ENCODE measurements at regions of chr11 and their contacts with region 1.

Region 1: GRCh38 chr11:18540207-18541009 is 13.7 kb upstream of the TSG101 start:
- DNase-seq: no peak
- H3K4me3 Mint-ChIP-seq: no peak overlapping the region
- H3K27ac Mint-ChIP-seq: no peak overlapping the region
- H3K4me1 Mint-ChIP-seq: peaks cover 8% of the 10 kb centered on the region
- H3K27me3 Mint-ChIP-seq: no peaks in the 10 kb centered on the region

Region 2: DNA sequence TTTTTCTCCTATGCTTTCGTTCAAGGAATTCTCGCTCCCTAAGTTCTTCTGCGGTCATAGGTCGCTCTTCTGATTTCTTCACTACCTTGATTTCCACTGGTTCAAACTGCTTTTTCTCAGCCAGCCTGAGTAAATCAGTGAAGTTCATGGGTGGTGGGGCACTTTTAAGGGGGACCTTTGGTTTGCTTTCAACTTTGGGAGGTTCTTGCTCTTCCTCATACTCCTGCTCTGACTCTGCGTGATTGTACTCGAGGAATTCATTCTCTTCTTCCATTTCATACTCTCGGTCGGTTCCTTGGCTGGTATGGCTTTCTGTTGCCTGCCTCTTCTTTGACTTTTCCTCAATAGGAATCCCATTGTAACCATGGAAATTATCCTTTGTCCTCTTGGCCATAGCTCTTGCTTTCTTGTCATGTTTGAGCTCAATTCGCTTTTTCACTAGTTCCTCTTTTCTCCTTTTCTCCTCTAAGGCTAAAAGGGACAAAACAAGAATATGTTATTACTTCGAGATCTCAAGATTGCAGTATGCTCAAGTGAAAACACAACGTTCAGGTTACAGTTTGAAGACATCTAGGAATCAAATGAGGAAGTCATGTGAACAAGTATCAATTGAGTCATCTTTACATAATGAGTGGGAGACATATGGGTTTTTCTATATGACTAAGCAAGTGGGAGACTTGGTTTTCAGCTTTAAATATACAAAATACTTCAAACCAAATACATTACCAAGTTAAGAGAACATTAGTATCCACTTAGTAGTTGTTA is 75.4 kb after region 1 on chr11:
- intact Hi-C with region 1: loop called (anchors 1 kb)
- DNase-seq: no peak
- H3K4me3 Mint-ChIP-seq: peak overlapping the region; percentile 70
- H3K27ac Mint-ChIP-seq: peak overlapping the region; percentile 87
- H3K4me1 Mint-ChIP-seq: peaks cover 67% of the 10 kb centered on the region
- H3K27me3 Mint-ChIP-seq: no peaks in the 10 kb centered on the region

Region 3: GRCh38 chr11:18650859-18651557 is 110.6 kb after region 1 on chr11:
- intact Hi-C with region 1: loop called (anchors 1 kb)
- DNase-seq: peak; percentile 47
- H3K4me3 Mint-ChIP-seq: no peak overlapping the region
- H3K27ac Mint-ChIP-seq: no peak overlapping the region
- H3K4me1 Mint-ChIP-seq: peaks cover 13% of the 10 kb centered on the region
- H3K27me3 Mint-ChIP-seq: no peaks in the 10 kb centered on the region

Region 4: GRCh38 chr11:18721561-18722292 is 181.3 kb after region 1 on chr11:
- intact Hi-C with region 1: loop called (anchors 2 kb)
- DNase-seq: peak; percentile 38
- H3K4me3 Mint-ChIP-seq: peak overlapping the region; percentile 87
- H3K27ac Mint-ChIP-seq: no peak overlapping the region
- H3K4me1 Mint-ChIP-seq: peaks cover 21% of the 10 kb centered on the region
- H3K27me3 Mint-ChIP-seq: peaks cover 31% of the 10 kb centered on the region

Region 5: DNA sequence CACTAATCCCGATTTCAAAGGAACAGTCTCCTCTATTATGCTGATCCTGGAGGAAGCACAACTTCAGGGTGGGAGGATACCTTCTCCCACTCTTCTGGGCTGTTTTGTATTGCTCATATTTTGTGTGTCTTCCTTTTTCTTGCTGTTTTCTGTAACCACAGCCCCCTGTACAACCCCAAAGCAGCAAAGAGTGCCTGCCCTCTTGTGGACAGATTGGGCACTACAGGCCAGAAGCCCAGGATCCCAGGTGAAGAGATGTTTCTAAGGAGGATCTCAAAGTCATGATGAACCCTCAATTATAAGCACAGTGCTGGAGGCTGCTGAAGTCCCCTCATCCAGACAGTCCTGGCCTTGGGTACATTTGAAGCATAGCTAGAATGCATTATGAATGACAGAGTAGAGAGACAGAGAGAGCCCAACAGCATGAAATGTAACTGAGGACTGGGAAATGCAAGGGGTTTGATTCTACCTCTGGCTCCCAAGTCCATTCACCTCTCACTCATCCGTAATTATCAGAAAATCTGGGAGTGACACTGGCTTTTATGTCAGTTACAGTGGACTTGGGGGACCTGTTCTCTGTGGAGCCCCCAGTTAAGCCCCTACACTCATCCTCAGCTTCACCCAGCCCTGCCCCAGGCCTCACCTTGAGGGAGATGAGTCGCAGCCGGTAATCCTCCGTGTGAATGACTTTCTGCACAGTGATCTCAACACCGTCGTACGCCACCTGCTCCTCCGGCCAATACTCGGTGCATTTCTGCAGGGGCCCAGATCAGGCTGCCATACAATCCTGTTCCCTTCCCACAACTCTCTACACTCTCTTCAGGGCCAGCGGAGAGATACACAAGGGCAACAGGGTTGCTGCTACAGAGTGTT is 191.8 kb after region 1 on chr11:
- intact Hi-C with region 1: loop called (anchors 1 kb)
- DNase-seq: peak; percentile 47
- H3K4me3 Mint-ChIP-seq: no peak overlapping the region
- H3K27ac Mint-ChIP-seq: no peak overlapping the region
- H3K4me1 Mint-ChIP-seq: no peaks in the 10 kb centered on the region
- H3K27me3 Mint-ChIP-seq: no peaks in the 10 kb centered on the region

Region 6: DNA sequence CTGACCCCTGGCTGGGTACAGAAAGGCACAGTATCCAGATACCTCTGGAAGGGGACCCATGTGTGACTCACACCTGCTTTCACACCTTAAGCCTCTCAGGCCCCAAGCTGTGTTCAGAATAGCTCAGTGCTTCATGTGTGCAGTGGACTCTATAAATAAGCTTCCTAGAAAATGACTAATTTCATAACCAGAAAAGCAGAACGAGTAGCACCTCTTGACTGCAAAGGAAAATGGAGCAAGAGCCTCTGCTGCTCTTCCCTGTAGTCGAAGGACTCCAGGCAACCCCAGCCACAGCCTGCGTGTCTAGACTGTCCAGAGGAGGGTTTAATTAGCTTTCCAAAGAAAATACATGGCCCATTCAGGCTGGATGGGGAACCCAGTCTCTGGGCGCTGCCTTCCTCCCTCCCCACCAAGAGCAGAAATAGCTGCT is 228.1 kb after region 1 on chr11:
- intact Hi-C with region 1: loop called (anchors 1 kb)
- DNase-seq: no peak
- H3K4me3 Mint-ChIP-seq: no peak overlapping the region
- H3K27ac Mint-ChIP-seq: no peak overlapping the region
- H3K4me1 Mint-ChIP-seq: peaks cover 34% of the 10 kb centered on the region
- H3K27me3 Mint-ChIP-seq: peaks cover 6% of the 10 kb centered on the region

Measured in activated T-helper 1 cell treated with anti-CD3 and anti-CD28 coated beads, Interleukin-12 subunit alpha, Interleukin-12 subunit beta, Interleukin-2, Interleukin-4 antibody, amounts not matched to agents 30 ng/mL and 10 ng/mL and 1 ng/mL, durations not matched to agents 14 hours and 24 hours and 36 hours (primary cell).